IMR-90 (cell line): ENCODE measurements at regions of chr13 and their contacts with region 1.

Region 1: GRCh38 chr13:105334211-105334610 is 1201.3 kb downstream of the EFNB2 start:
- DNase-seq: peak; percentile 79
- ATAC-seq: peak; percentile 86
- H3K4me3 ChIP-seq: no peak overlapping the region
- H3K27ac ChIP-seq: peak overlapping the region; percentile 45; the same call in 1 of the 2 replicates
- H3K4me1 ChIP-seq: peaks cover 18% of the 10 kb centered on the region
- H3K27me3 ChIP-seq: no peaks in the 10 kb centered on the region
- CTCF ChIP-seq: no peak
- POLR2A ChIP-seq: no peak
- RAD21 ChIP-seq: no peak

Region 2: DNA sequence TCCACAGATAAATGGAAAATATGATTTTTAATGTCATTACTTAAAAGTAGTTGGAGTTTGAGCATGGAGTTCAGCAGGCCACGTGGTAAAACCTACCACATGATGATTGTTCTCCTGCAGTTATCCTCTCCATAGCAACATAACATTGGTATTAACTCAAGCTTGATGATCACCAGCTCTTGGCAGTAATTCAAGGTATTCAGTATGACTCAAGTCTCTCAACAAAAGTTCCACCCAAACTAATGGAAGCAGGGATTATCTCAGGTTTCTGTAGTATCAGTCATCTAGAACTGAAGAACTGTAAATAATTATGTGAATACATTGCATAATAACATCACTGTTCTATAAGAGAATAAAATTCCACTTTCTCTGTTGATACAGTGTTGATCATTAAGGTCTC is 108.7 kb after region 1 on chr13:
- CTCF ChIA-PET with region 1: no interaction called
- POLR2A ChIA-PET with region 1: no interaction called
- dilution Hi-C with region 1: no loop called
- in situ Hi-C with region 1: no loop called
- intact Hi-C with region 1: loop called (anchors 5 kb)
- DNase-seq: peak; percentile 100
- ATAC-seq: peak; percentile 79
- H3K4me3 ChIP-seq: no peak overlapping the region
- H3K27ac ChIP-seq: no peak overlapping the region
- H3K4me1 ChIP-seq: no peaks in the 10 kb centered on the region
- H3K27me3 ChIP-seq: no peaks in the 10 kb centered on the region
- CTCF ChIP-seq: no peak
- POLR2A ChIP-seq: no peak
- RAD21 ChIP-seq: no peak

Region 3: GRCh38 chr13:105543742-105544141 is 209.5 kb after region 1 on chr13:
- CTCF ChIA-PET with region 1: no interaction called
- POLR2A ChIA-PET with region 1: no interaction called
- dilution Hi-C with region 1: no loop called
- in situ Hi-C with region 1: no loop called
- intact Hi-C with region 1: no loop called
- DNase-seq: no peak
- ATAC-seq: no peak
- H3K4me3 ChIP-seq: no peak overlapping the region
- H3K27ac ChIP-seq: no peak overlapping the region
- H3K4me1 ChIP-seq: no peaks in the 10 kb centered on the region
- H3K27me3 ChIP-seq: no peaks in the 10 kb centered on the region
- CTCF ChIP-seq: no peak
- POLR2A ChIP-seq: no peak
- RAD21 ChIP-seq: no peak

Region 4: DNA sequence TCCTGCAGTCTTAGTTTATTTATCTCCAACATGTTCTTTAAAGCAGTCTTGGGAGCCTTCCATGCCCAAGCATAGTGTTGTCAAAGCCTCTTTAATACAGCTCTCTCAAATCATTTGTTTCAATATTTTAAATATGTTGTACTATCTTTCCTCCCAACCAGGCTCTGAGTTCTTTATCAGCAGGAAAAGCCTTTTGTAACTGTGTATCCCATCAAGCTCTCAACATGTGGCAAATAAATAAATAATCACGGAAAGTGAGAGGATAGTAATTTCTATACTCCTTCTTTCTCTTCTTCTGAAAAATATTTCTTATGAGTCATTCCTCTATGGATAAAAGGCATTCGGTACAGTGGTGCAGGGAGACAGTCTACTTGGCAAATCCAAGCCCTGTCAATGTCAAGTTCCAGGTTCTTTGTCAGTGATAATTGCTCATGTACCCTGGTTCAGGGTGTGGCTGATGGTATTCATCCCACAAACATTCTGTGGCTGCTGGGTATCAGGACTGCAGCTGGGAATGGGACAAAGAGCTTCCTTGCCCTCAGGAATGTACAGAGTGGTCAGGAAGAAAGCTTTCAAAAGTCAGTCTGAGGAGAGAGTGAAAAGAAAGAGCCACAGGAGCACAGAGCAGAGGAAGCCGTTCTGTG is 817.0 kb after region 1 on chr13:
- CTCF ChIA-PET with region 1: no interaction called
- POLR2A ChIA-PET with region 1: no interaction called
- dilution Hi-C with region 1: no loop called
- in situ Hi-C with region 1: no loop called
- intact Hi-C with region 1: loop called (anchors 10 kb)
- DNase-seq: peak; percentile 84
- ATAC-seq: peak; percentile 81
- H3K4me3 ChIP-seq: no peak overlapping the region
- H3K27ac ChIP-seq: peak overlapping the region; percentile 55
- H3K4me1 ChIP-seq: peaks cover 10% of the 10 kb centered on the region
- H3K27me3 ChIP-seq: no peaks in the 10 kb centered on the region
- CTCF ChIP-seq: no peak
- POLR2A ChIP-seq: no peak
- RAD21 ChIP-seq: no peak